CD4-positive, alpha-beta T cell (primary cell): ENCODE measurements at regions of chr17 and their contacts with region 1.

Region 1: DNA sequence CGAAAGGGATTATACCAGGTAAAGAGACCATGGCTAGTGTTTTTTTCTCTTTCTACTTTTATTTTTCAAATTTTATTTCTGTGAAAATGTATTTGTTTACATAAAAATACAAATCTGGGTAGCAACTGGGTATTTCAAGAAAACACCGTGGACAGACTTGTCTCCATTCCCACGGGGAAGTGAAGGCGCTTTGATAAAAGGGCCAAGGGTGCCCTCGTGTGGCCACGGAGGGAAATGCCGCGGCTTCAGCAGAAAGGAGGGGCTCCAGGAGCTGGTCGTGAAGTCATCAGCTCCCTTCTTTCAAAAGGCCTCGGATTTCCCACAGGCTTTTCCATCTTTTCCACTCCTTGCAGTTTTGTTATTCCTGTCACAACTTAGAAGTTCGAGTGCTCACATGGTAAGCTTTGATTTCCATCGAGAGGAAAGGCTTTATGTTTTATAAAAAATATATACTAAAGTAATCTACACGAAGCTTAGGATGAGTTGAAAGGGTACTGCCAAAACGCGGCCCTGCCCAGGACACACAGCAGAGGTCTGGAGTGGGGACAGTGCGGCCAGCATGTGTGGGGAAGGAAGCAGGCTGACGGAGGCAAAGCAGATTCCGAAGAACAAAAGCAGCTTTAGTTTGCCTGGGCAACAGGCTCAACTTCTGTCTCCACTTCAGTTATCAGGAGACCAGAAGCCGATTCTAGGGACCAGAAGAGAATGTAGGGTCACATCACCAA is 15.3 kb upstream of the MNT start:
- DNase-seq: peak; percentile 70 to 93 (median 85)
- ATAC-seq: peak; percentile 90
- H3K4me3 ChIP-seq: no peak overlapping the region
- H3K4me3 Mint-ChIP-seq: no peak overlapping the region
- H3K27ac ChIP-seq: no peak overlapping the region
- H3K27ac Mint-ChIP-seq: peak overlapping the region; percentile 31
- H3K4me1 ChIP-seq: no peaks in the 10 kb centered on the region
- H3K4me1 Mint-ChIP-seq: no peaks in the 10 kb centered on the region
- H3K27me3 ChIP-seq: no peaks in the 10 kb centered on the region
- H3K27me3 Mint-ChIP-seq: no peaks in the 10 kb centered on the region
- CTCF ChIP-seq: peak; percentile 98

Region 2: DNA sequence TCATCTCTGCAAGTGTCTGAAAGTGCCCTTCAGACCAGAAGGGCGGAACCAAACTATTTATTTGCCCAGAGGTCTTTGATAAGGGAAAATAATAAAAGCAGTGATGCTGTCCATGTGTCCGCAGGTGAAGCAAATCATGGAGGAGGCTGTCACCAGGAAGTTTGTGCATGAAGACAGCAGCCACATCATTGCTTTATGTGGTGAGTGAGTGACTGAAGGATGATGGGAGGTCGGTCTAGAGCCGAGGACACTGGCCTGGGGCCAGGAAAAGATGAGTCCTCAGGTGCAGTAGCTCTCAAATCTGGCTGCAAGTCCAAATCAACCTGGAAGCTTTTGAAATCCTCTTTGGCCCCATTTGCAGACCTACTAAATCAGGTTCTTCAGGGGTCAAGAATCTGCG is 72.8 kb before region 1 on chr17:
- CTCF ChIA-PET with region 1: no interaction called
- POLR2A ChIA-PET with region 1: no interaction called
- intact Hi-C with region 1: no loop called
- DNase-seq: peak in 6 of 14 experiments; percentile 12 to 45 (median 33)
- ATAC-seq: peak; percentile 50
- H3K4me3 ChIP-seq: no peak overlapping the region
- H3K4me3 Mint-ChIP-seq: no peak overlapping the region
- H3K27ac ChIP-seq: no peak overlapping the region
- H3K27ac Mint-ChIP-seq: no peak overlapping the region
- H3K4me1 ChIP-seq: peaks cover 9% of the 10 kb centered on the region
- H3K4me1 Mint-ChIP-seq: peaks cover 13% of the 10 kb centered on the region
- H3K27me3 ChIP-seq: no peaks in the 10 kb centered on the region
- H3K27me3 Mint-ChIP-seq: no peaks in the 10 kb centered on the region
- CTCF ChIP-seq: no peak

Region 3: GRCh38 chr17:2354311-2354710 is 61.9 kb before region 1 on chr17:
- CTCF ChIA-PET with region 1: interaction called, 11 read pairs
- POLR2A ChIA-PET with region 1: no interaction called
- intact Hi-C with region 1: no loop called
- DNase-seq: no peak
- ATAC-seq: no peak
- H3K4me3 ChIP-seq: no peak overlapping the region
- H3K4me3 Mint-ChIP-seq: peak overlapping the region; percentile 8
- H3K27ac ChIP-seq: no peak overlapping the region
- H3K27ac Mint-ChIP-seq: peak overlapping the region; percentile 65
- H3K4me1 ChIP-seq: peaks cover 20% of the 10 kb centered on the region
- H3K4me1 Mint-ChIP-seq: peaks cover 18% of the 10 kb centered on the region
- H3K27me3 ChIP-seq: no peaks in the 10 kb centered on the region
- H3K27me3 Mint-ChIP-seq: no peaks in the 10 kb centered on the region
- CTCF ChIP-seq: no peak

Region 4: GRCh38 chr17:2380226-2380922 is 35.8 kb before region 1 on chr17:
- CTCF ChIA-PET with region 1: interaction called, 204 read pairs
- POLR2A ChIA-PET with region 1: interaction called, 56 read pairs
- intact Hi-C with region 1: loop called (anchors 1 kb)
- DNase-seq: no peak
- ATAC-seq: no peak
- H3K4me3 ChIP-seq: no peak overlapping the region
- H3K4me3 Mint-ChIP-seq: no peak overlapping the region
- H3K27ac ChIP-seq: no peak overlapping the region
- H3K27ac Mint-ChIP-seq: no peak overlapping the region
- H3K4me1 ChIP-seq: peaks cover 11% of the 10 kb centered on the region
- H3K4me1 Mint-ChIP-seq: peaks cover 6% of the 10 kb centered on the region
- H3K27me3 ChIP-seq: no peaks in the 10 kb centered on the region
- H3K27me3 Mint-ChIP-seq: no peaks in the 10 kb centered on the region
- CTCF ChIP-seq: no peak

Region 5: GRCh38 chr17:2392252-2393173 is 23.7 kb before region 1 on chr17:
- CTCF ChIA-PET with region 1: interaction called, 15 read pairs
- POLR2A ChIA-PET with region 1: interaction called, 24 read pairs
- intact Hi-C with region 1: no loop called
- DNase-seq: peak; percentile 93 to 99 (median 97)
- ATAC-seq: peak; percentile 64
- H3K4me3 ChIP-seq: peak overlapping the region; percentile 94
- H3K4me3 Mint-ChIP-seq: peak overlapping the region; percentile 99
- H3K27ac ChIP-seq: peak overlapping the region; percentile 98 to 100
- H3K27ac Mint-ChIP-seq: peak overlapping the region; percentile 99
- H3K4me1 ChIP-seq: peaks cover 67% of the 10 kb centered on the region
- H3K4me1 Mint-ChIP-seq: peaks cover 66% of the 10 kb centered on the region
- H3K27me3 ChIP-seq: no peaks in the 10 kb centered on the region
- H3K27me3 Mint-ChIP-seq: no peaks in the 10 kb centered on the region
- CTCF ChIP-seq: no peak

Region 6: GRCh38 chr17:2401426-2402221 is 14.5 kb before region 1 on chr17:
- CTCF ChIA-PET with region 1: interaction called, 15 read pairs
- POLR2A ChIA-PET with region 1: interaction called, 12 read pairs
- intact Hi-C with region 1: loop called in 1 of 2 experiments (anchors 1 kb)
- DNase-seq: peak; percentile 97 to 99 (median 99)
- ATAC-seq: peak; percentile 58
- H3K4me3 ChIP-seq: peak overlapping the region; percentile 93
- H3K4me3 Mint-ChIP-seq: peak overlapping the region; percentile 100
- H3K27ac ChIP-seq: peak overlapping the region; percentile 93 to 100
- H3K27ac Mint-ChIP-seq: peak overlapping the region; percentile 99
- H3K4me1 ChIP-seq: peaks cover 51% of the 10 kb centered on the region
- H3K4me1 Mint-ChIP-seq: peaks cover 47% of the 10 kb centered on the region
- H3K27me3 ChIP-seq: no peaks in the 10 kb centered on the region
- H3K27me3 Mint-ChIP-seq: no peaks in the 10 kb centered on the region
- CTCF ChIP-seq: no peak

Region 7: GRCh38 chr17:2466936-2467335 is 50.8 kb after region 1 on chr17:
- CTCF ChIA-PET with region 1: no interaction called
- POLR2A ChIA-PET with region 1: no interaction called
- intact Hi-C with region 1: no loop called
- DNase-seq: no peak
- ATAC-seq: no peak
- H3K4me3 ChIP-seq: no peak overlapping the region
- H3K4me3 Mint-ChIP-seq: no peak overlapping the region
- H3K27ac ChIP-seq: no peak overlapping the region
- H3K27ac Mint-ChIP-seq: no peak overlapping the region
- H3K4me1 ChIP-seq: no peaks in the 10 kb centered on the region
- H3K4me1 Mint-ChIP-seq: no peaks in the 10 kb centered on the region
- H3K27me3 ChIP-seq: no peaks in the 10 kb centered on the region
- H3K27me3 Mint-ChIP-seq: no peaks in the 10 kb centered on the region
- CTCF ChIP-seq: no peak